ENCODE measurements at regions of chr14 and their contacts with region 1.

Region 1: GRCh38 chr14:59897761-59898383 is 22.1 kb upstream of the LRRC9 start:
- DNase-seq: no peak
- ATAC-seq: peak; percentile 68
- H3K4me3 ChIP-seq: no peak overlapping the region
- H3K27ac ChIP-seq: no peak overlapping the region
- H3K4me1 ChIP-seq: no peaks in the 10 kb centered on the region
- H3K27me3 ChIP-seq: no peaks in the 10 kb centered on the region; a peak in 1 of 4 replicates
- CTCF ChIP-seq: peak; percentile 34 to 36 (median 34); a peak in 4 of 6 replicates
- EP300 ChIP-seq: no peak
- POLR2A ChIP-seq: no peak
- RAD21 ChIP-seq: peak; percentile 68

Region 2: DNA sequence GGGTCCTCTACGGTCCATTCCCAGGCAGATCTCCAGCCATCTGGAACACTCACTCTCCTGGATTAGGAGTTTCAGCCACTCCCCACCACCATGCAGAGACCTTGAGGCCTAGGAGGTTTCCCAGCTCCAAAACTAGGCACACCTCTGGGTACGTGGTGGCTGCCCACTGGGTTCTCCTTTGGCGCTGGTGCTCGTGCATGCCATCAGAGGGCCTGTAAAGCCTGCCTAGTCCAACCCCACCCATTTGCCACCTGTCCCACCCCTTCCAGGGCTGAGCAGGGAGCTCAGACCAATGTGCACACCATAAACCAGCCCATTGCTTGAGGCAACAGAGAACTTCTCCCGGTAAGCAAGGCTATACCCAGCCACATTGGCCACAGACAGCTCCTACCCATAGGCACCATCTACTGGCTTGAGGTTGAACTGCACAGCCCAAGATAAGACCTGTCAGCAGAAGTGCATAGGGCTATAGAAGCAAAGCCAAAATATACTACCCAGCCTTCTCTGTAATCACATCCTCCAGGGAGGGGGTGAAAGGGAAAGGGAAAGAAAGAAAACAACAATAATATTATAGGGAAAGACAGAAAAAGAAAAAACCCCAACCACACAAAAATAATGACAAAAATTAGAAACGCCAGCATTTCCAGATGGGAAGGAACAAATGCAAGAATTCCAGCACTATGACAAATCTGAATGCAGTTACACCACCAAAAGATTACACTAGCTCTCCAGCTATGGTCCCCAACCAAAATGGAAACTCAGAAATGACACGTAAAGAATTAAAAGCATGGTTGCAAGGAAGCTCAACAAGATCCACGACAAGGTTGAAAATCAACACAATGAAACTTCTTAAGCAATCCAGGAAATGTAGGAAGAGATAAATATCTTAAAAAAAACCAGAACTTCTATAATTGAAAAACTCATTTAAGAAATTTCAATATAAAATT is 209.4 kb before region 1 on chr14:
- CTCF ChIA-PET with region 1: interaction called, 10 read pairs
- POLR2A ChIA-PET with region 1: no interaction called
- RAD21 ChIA-PET with region 1: no interaction called
- SMC1A ChIA-PET with region 1: no interaction called
- in situ Hi-C with region 1: no loop called
- intact Hi-C with region 1: no loop called
- DNase-seq: no peak
- ATAC-seq: peak; percentile 99
- H3K4me3 ChIP-seq: no peak overlapping the region
- H3K27ac ChIP-seq: no peak overlapping the region
- H3K4me1 ChIP-seq: no peaks in the 10 kb centered on the region
- H3K27me3 ChIP-seq: no peaks in the 10 kb centered on the region
- CTCF ChIP-seq: peak; percentile 64 to 84 (median 81)
- EP300 ChIP-seq: no peak
- POLR2A ChIP-seq: no peak
- RAD21 ChIP-seq: peak; percentile 60

Region 3: GRCh38 chr14:59711080-59711479 is 186.8 kb before region 1 on chr14:
- CTCF ChIA-PET with region 1: interaction called, 5 read pairs
- POLR2A ChIA-PET with region 1: no interaction called
- RAD21 ChIA-PET with region 1: no interaction called
- SMC1A ChIA-PET with region 1: no interaction called
- in situ Hi-C with region 1: no loop called
- intact Hi-C with region 1: loop called (anchors 10 kb)
- DNase-seq: no peak
- ATAC-seq: no peak
- H3K4me3 ChIP-seq: no peak overlapping the region
- H3K27ac ChIP-seq: no peak overlapping the region
- H3K4me1 ChIP-seq: no peaks in the 10 kb centered on the region
- H3K27me3 ChIP-seq: no peaks in the 10 kb centered on the region
- CTCF ChIP-seq: no peak
- EP300 ChIP-seq: no peak
- POLR2A ChIP-seq: no peak
- RAD21 ChIP-seq: no peak

Region 4: DNA sequence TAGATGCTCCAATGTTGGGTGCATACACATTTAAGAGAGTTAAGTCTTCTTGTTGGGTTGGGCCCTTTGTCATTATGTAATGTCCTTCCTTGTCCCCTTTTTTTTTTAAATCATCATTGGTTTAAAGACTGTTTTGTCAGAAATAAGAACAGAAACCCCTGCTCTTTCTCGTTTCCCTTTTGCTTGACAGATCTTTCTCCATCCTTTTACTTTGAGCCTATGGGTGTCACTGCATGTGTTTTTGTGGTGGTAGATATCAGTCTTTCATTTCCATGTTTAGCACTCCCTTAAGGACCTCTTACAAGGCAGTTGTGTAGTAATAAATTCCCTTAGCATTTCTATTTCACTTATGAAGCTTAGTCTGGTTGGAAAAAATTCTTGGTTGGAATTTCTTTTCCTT is 74.7 kb before region 1 on chr14:
- CTCF ChIA-PET with region 1: no interaction called
- POLR2A ChIA-PET with region 1: no interaction called
- RAD21 ChIA-PET with region 1: no interaction called
- SMC1A ChIA-PET with region 1: no interaction called
- in situ Hi-C with region 1: no loop called
- intact Hi-C with region 1: no loop called
- DNase-seq: peak; percentile 12
- ATAC-seq: peak; percentile 66
- H3K4me3 ChIP-seq: no peak overlapping the region
- H3K27ac ChIP-seq: no peak overlapping the region
- H3K4me1 ChIP-seq: no peaks in the 10 kb centered on the region
- H3K27me3 ChIP-seq: peaks cover 0 to 2% of the 10 kb centered on the region in 2 experiments; a peak in 1 of 4 replicates
- CTCF ChIP-seq: no peak
- EP300 ChIP-seq: no peak
- POLR2A ChIP-seq: no peak
- RAD21 ChIP-seq: no peak

Region 5: GRCh38 chr14:59926534-59926933 is 28.7 kb after region 1 on chr14:
- CTCF ChIA-PET with region 1: no interaction called
- POLR2A ChIA-PET with region 1: no interaction called
- RAD21 ChIA-PET with region 1: no interaction called
- SMC1A ChIA-PET with region 1: no interaction called
- in situ Hi-C with region 1: no loop called
- intact Hi-C with region 1: no loop called
- DNase-seq: no peak
- ATAC-seq: peak; percentile 81
- H3K4me3 ChIP-seq: no peak overlapping the region
- H3K27ac ChIP-seq: no peak overlapping the region
- H3K4me1 ChIP-seq: no peaks in the 10 kb centered on the region
- H3K27me3 ChIP-seq: no peaks in the 10 kb centered on the region
- CTCF ChIP-seq: no peak
- EP300 ChIP-seq: no peak
- POLR2A ChIP-seq: no peak
- RAD21 ChIP-seq: no peak